Prostate gland (tissue), 2 donors: ENCODE measurements at regions of chr16 and their contacts with region 1.

Region 1: DNA sequence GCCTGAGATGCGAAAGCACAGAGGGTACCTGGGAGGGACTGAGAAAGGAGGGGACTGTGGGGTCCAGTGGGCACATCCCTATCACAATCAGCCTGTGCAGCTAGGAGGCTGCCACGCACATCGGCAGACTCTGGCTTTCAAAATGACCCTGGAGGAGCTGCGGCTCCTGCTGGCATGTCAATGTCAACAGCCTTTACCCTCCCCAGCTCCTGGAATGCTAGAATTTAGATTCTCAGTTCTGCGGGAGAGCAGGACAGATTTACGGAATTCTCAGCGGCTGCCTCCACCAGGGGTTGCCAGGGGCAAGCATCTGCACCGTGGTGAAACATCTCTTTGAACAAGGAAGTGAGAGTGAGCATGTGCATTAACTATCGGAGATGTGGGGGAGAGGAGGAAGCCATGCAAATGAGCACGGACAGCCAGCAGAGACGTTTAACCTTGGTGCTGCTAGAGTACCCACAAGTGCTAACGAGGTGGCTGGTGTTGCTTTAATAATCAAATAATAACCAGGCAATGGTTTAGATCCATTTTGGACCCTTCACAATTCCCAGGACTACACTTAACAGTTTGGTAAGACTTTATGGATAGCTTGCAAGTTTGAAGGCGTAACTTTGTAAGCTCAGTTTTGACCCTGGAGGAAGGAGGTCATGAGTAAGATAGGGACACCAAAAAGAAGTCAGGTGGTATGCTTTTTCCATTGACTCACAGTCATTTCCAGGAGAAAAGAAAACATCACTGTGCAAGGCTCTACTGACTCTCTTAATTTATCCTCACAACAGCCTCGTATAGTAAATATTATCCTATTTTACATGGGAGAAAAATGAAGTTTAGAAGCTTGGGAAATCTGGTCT is 54.1 kb downstream of the XYLT1 start:
- DNase-seq: no peak
- H3K4me3 ChIP-seq: no peak overlapping the region
- H3K27ac ChIP-seq: no peak overlapping the region
- H3K4me1 ChIP-seq: no peaks in the 10 kb centered on the region
- H3K27me3 ChIP-seq: no peaks in the 10 kb centered on the region
- CTCF ChIP-seq: peak in 1 of 4 experiments; percentile 29
- POLR2A ChIP-seq: no peak

Region 2: DNA sequence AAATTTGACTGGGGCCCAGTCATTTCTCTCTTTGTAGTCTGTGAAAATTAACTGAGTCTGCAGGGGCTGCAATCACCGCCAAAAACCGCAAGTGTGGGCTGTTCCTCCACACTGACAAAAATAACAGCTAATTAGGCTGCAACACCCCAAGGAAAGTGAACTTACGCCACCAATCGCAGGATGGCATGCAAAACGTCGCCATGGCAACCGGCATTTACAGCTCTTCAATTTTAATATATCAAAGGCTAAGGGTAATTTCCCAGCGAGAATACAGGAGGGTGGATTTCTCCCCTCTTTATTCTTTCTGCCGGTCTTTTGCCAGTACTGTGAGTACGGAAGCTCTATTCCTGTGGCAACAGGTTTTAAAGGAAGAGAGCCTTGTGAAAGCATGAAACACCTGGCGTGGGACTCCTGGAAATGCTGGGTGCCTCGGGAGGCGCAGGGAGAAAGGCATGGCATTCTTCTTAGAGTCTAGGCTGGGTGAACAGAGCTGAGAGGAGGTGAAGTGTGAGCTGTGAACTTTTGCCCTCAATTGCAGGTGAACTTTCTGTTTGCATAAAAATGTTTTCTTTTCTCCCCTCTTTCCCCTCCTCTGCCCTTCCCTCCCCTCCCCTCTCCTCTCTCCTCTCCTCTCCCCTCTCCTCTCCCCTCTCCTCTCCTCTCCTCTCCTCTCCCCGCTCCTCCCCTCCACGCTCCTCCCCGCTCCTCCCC is 345.6 kb before region 1 on chr16:
- intact Hi-C with region 1: no loop called
- DNase-seq: peak; percentile 64
- H3K4me3 ChIP-seq: no peak overlapping the region
- H3K27ac ChIP-seq: peak overlapping the region; percentile 44 to 50
- H3K4me1 ChIP-seq: peaks cover 2% of the 10 kb centered on the region
- H3K27me3 ChIP-seq: no peaks in the 10 kb centered on the region
- CTCF ChIP-seq: no peak
- POLR2A ChIP-seq: no peak

Region 3: GRCh38 chr16:17224879-17225281 is 191.8 kb before region 1 on chr16:
- intact Hi-C with region 1: loop called (anchors 10 kb)
- DNase-seq: peak; percentile 69
- H3K4me3 ChIP-seq: no peak overlapping the region
- H3K27ac ChIP-seq: peak overlapping the region; percentile 3 to 15
- H3K4me1 ChIP-seq: no peaks in the 10 kb centered on the region
- H3K27me3 ChIP-seq: no peaks in the 10 kb centered on the region
- CTCF ChIP-seq: peak in 1 of 4 experiments; percentile 5
- POLR2A ChIP-seq: no peak

Region 4: DNA sequence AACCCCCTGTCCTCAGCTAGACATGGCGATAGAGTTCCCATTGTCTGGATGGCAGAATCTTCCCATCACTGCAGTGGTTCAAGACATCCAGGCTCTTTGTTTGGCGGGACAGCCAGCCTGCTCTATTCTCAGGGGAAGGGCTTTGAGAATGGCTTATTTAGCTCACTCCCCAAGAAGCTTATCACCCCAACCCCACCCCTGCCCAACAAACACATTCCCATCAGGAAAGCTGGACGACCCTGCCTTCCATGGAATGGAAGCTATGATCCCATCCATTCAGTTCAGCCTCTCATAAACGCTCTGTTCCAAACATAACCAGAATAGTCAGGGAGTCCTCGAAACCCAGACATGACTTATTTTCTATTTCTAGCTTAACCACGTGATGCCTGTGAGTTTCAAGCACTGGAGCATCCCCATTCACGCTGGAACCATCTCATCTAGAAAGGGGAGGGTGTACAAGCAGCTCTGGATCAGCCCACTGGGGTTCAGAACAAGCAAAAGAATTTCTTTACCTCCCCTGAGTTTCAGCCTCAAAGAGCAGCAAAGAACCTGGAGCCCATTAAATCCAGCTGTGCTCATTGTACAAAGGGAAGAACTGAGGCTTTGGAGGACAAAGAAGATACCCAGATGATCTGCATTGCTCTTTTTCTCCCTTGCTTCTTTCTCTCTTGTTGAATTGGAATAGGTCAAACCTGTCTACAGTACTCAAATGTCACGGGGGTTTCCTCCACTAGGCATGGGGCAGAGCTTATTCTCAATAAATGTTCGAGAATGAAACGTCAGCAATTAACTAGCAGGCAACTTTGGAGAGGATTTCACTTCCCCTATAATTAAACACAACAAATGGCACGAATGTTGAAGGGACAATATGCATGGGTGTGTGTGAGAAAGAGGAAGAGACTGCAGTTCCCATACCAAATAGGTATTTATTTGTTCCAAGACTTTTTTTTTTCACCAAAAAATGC is 39.0 kb before region 1 on chr16:
- intact Hi-C with region 1: loop called (anchors 5 kb)
- DNase-seq: no peak
- H3K4me3 ChIP-seq: no peak overlapping the region
- H3K27ac ChIP-seq: peak overlapping the region in 1 of 2 donors; percentile 3
- H3K4me1 ChIP-seq: peaks cover 14% of the 10 kb centered on the region
- H3K27me3 ChIP-seq: no peaks in the 10 kb centered on the region
- CTCF ChIP-seq: no peak
- POLR2A ChIP-seq: no peak